ENCODE measurements at regions of chr22 and their contacts with region 1.

Region 1: DNA sequence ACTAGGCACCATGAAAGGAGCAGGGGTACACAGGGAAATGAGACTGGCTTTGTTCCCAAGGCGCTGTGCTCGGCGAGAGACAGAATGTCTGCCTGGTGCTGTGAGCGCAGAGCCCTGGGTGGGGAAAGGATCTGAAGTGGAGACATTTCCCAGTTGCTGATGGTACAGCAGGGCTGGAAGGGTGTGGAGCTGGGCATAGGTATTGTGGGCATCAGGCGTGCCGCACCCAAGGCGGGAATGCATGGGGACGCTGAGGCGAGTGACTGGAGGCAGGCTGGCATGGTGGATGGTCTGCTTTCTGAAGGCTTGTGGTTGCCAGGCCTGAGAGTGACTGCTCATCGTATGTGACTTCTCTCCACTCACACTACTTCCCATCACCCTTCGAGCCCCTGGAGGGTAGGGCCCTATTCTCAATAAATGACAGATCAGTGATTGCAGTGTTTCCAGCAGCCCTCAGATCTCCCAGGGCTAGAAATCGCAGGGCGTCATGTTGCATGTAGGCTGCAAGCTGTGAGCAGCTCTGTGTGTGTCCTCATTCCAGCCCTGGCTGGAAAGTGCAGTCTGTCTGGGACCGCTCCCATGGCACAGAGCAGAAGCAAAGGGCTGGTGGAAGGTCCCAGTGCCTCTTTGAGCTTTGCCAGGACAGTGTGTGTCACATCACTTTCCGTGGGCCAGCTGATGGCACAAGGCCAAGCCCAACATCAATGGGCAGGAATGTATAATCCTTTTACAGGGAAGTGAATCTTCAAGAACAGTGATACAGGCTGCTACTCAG is 67.7 kb downstream of the TBC1D22A start:
- DNase-seq: peak; percentile 65 to 73
- ATAC-seq: peak; percentile 17 to 74 (median 66)
- H3K4me3 ChIP-seq: no peak overlapping the region
- H3K27ac ChIP-seq: no peak overlapping the region
- H3K4me1 ChIP-seq: peaks cover 21% of the 10 kb centered on the region
- H3K27me3 ChIP-seq: no peaks in the 10 kb centered on the region
- CTCF ChIP-seq: no peak

Region 2: GRCh38 chr22:45159652-45160462 is 1670.3 kb before region 1 on chr22:
- intact Hi-C with region 1: loop called in 1 of 2 experiments (anchors 10 kb)
- DNase-seq: no peak
- ATAC-seq: no peak
- H3K4me3 ChIP-seq: no peak overlapping the region
- H3K27ac ChIP-seq: peak overlapping the region; percentile 44
- H3K4me1 ChIP-seq: peaks cover 20% of the 10 kb centered on the region
- H3K27me3 ChIP-seq: no peaks in the 10 kb centered on the region
- CTCF ChIP-seq: no peak

Region 3: GRCh38 chr22:46296257-46297150 is 533.6 kb before region 1 on chr22 and contains the start of gene GTSE1:
- intact Hi-C with region 1: no loop called
- DNase-seq: peak; percentile 98 to 99
- ATAC-seq: peak; percentile 96 to 99 (median 98)
- H3K4me3 ChIP-seq: peak within 1 kb of the TSS; percentile 74
- H3K27ac ChIP-seq: peak within 1 kb of the TSS; percentile 89
- H3K4me1 ChIP-seq: peaks cover 7% of the 10 kb centered on the region
- H3K27me3 ChIP-seq: no peaks in the 10 kb centered on the region
- CTCF ChIP-seq: peak; percentile 20
- total RNA-seq, gene GTSE1: 0.15 to 0.47 (median 0.29) TPM in 3 of 4 donors, not detected in the other

Region 4: GRCh38 chr22:46635756-46636155 is 194.4 kb before region 1 on chr22:
- intact Hi-C with region 1: no loop called
- DNase-seq: no peak
- ATAC-seq: peak; percentile 18 to 54 (median 28)
- H3K4me3 ChIP-seq: peak overlapping the region; percentile 25
- H3K27ac ChIP-seq: peak overlapping the region; percentile 82
- H3K4me1 ChIP-seq: peaks cover 40% of the 10 kb centered on the region
- H3K27me3 ChIP-seq: no peaks in the 10 kb centered on the region
- CTCF ChIP-seq: no peak

Region 5: GRCh38 chr22:46681010-46681409 is 149.1 kb before region 1 on chr22:
- intact Hi-C with region 1: no loop called
- DNase-seq: no peak
- ATAC-seq: no peak
- H3K4me3 ChIP-seq: no peak overlapping the region
- H3K27ac ChIP-seq: no peak overlapping the region
- H3K4me1 ChIP-seq: peaks cover 11% of the 10 kb centered on the region
- H3K27me3 ChIP-seq: no peaks in the 10 kb centered on the region
- CTCF ChIP-seq: peak; percentile 17